ENCODE measurements at regions of chr4 and their contacts with region 1.

Region 1: DNA sequence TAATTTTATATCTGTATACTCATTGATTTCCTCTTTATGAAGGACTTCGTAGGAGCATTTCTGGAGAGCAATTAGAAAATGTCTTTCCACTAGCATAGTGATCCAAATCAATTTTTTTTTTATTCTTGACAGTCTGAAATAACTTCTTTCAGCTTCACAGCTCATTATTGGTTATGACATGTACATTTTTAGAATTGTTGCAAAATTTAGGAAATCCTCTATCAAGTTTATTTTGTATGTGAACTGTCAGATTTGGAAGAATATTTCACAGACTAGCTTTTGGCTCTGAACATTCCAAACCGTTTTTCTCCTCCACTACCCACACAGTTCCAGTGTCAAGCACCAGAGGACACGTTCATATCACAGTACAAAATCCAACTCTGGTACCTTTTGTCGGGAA is 249.6 kb upstream of the ATOH1 start:
- DNase-seq: no peak
- ATAC-seq: no peak
- H3K4me3 Mint-ChIP-seq: no peak overlapping the region
- H3K27ac Mint-ChIP-seq: no peak overlapping the region
- H3K4me1 Mint-ChIP-seq: no peaks in the 10 kb centered on the region
- H3K27me3 Mint-ChIP-seq: no peaks in the 10 kb centered on the region
- CTCF ChIP-seq: no peak

Region 2: DNA sequence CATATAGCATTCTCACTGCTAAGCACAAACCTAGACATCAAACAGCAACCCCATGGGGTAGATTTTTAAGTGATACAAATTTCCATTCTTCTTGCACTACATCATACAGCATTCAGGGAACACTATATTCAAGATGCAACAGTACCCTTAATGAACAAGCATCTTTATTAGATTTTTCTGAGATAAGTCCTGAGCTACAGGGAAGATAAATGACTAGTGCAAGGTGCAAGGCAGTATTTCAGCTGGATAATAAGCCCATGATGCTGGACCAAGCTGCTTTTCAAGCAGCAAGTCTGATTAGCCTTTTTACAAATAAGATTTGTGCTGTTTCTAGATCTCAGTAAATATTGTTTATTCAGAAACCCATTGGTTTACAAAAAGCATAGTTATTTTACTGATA is 57.0 kb after region 1 on chr4:
- CTCF ChIA-PET with region 1: no interaction called
- POLR2A ChIA-PET with region 1: no interaction called
- intact Hi-C with region 1: loop called (anchors 5 kb)
- DNase-seq: no peak
- ATAC-seq: no peak
- H3K4me3 Mint-ChIP-seq: no peak overlapping the region
- H3K27ac Mint-ChIP-seq: no peak overlapping the region
- H3K4me1 Mint-ChIP-seq: no peaks in the 10 kb centered on the region
- H3K27me3 Mint-ChIP-seq: no peaks in the 10 kb centered on the region
- CTCF ChIP-seq: no peak

Region 3: GRCh38 chr4:93865650-93866049 is 286.7 kb after region 1 on chr4:
- CTCF ChIA-PET with region 1: no interaction called
- POLR2A ChIA-PET with region 1: no interaction called
- intact Hi-C with region 1: no loop called
- DNase-seq: no peak
- ATAC-seq: no peak
- H3K4me3 Mint-ChIP-seq: no peak overlapping the region
- H3K27ac Mint-ChIP-seq: no peak overlapping the region
- H3K4me1 Mint-ChIP-seq: no peaks in the 10 kb centered on the region
- H3K27me3 Mint-ChIP-seq: no peaks in the 10 kb centered on the region
- CTCF ChIP-seq: no peak

Measured in activated CD8-positive, alpha-beta T cell treated with anti-CD3 and anti-CD28 coated beads for 36 hours (primary cell).